Naive thymus-derived CD4-positive, alpha-beta T cell (primary cell): ENCODE measurements at regions of chr2 and their contacts with region 1.

Region 1: GRCh38 chr2:211157856-211158463 is 601.6 kb downstream of the CPS1 start:
- DNase-seq: peak; percentile 10 to 60 (median 37)
- ATAC-seq: peak; percentile 73
- H3K4me3 ChIP-seq: no peak overlapping the region
- H3K4me3 Mint-ChIP-seq: no peak overlapping the region
- H3K27ac ChIP-seq: no peak overlapping the region
- H3K27ac Mint-ChIP-seq: no peak overlapping the region
- H3K4me1 ChIP-seq: no peaks in the 10 kb centered on the region
- H3K4me1 Mint-ChIP-seq: peaks cover 0 to 2% (median 0%) of the 10 kb centered on the region in 7 donors
- H3K27me3 ChIP-seq: no peaks in the 10 kb centered on the region
- H3K27me3 Mint-ChIP-seq: peaks cover 0 to 4% (median 0%) of the 10 kb centered on the region in 5 donors

Region 2: GRCh38 chr2:210252699-210253606 is 905.0 kb before region 1 on chr2:
- CTCF ChIA-PET with region 1: no interaction called
- POLR2A ChIA-PET with region 1: no interaction called
- intact Hi-C with region 1: loop called in 1 of 2 experiments (anchors 5 kb)
- DNase-seq: no peak
- ATAC-seq: no peak
- H3K4me3 ChIP-seq: no peak overlapping the region
- H3K4me3 Mint-ChIP-seq: no peak overlapping the region
- H3K27ac ChIP-seq: no peak overlapping the region
- H3K27ac Mint-ChIP-seq: no peak overlapping the region
- H3K4me1 ChIP-seq: no peaks in the 10 kb centered on the region
- H3K4me1 Mint-ChIP-seq: no peaks in the 10 kb centered on the region
- H3K27me3 ChIP-seq: no peaks in the 10 kb centered on the region
- H3K27me3 Mint-ChIP-seq: peaks cover 0 to 5% (median 0%) of the 10 kb centered on the region in 5 donors

Region 3: GRCh38 chr2:210577263-210578071 is 580.5 kb before region 1 on chr2:
- CTCF ChIA-PET with region 1: no interaction called
- POLR2A ChIA-PET with region 1: no interaction called
- intact Hi-C with region 1: loop called (anchors 2 to 5 kb)
- DNase-seq: peak in 5 of 9 donors; percentile 6 to 31 (median 19)
- ATAC-seq: peak; percentile 48
- H3K4me3 ChIP-seq: no peak overlapping the region
- H3K4me3 Mint-ChIP-seq: no peak overlapping the region
- H3K27ac ChIP-seq: no peak overlapping the region
- H3K27ac Mint-ChIP-seq: no peak overlapping the region
- H3K4me1 ChIP-seq: no peaks in the 10 kb centered on the region
- H3K4me1 Mint-ChIP-seq: peaks cover 0 to 5% (median 0%) of the 10 kb centered on the region in 7 donors
- H3K27me3 ChIP-seq: no peaks in the 10 kb centered on the region
- H3K27me3 Mint-ChIP-seq: peaks cover 0 to 3% (median 0%) of the 10 kb centered on the region in 5 donors

Region 4: DNA sequence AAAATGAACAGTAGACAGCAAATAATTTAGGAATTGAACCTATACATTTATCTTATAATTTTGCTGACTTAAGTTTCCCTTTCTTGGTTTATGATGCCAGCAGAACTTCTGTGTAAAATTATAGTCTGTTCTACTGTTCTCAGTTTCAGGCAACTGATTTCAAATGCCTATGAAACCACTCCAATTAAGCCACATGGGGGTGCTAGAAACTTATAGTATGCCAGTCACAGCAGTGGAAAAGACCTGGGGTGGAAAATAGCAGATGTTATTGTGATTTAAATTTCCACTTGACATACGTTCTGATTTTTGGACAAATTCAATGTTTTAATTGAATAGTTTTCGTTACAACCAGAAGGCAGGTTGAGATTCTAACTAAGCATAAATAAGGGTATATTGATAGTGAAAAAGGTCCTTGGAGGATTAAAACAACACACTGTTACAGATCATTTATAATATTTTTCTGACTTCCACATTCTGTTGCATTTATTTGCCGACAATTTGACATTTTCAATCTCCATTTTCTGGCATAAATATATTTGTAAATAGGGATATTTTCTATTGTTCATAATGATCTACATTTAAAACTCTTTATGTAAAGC is 540.1 kb before region 1 on chr2:
- CTCF ChIA-PET with region 1: no interaction called
- POLR2A ChIA-PET with region 1: no interaction called
- intact Hi-C with region 1: loop called (anchors 2 to 5 kb)
- DNase-seq: no peak
- ATAC-seq: no peak
- H3K4me3 ChIP-seq: no peak overlapping the region
- H3K4me3 Mint-ChIP-seq: no peak overlapping the region
- H3K27ac ChIP-seq: no peak overlapping the region
- H3K27ac Mint-ChIP-seq: no peak overlapping the region
- H3K4me1 ChIP-seq: no peaks in the 10 kb centered on the region
- H3K4me1 Mint-ChIP-seq: no peaks in the 10 kb centered on the region
- H3K27me3 ChIP-seq: no peaks in the 10 kb centered on the region
- H3K27me3 Mint-ChIP-seq: no peaks in the 10 kb centered on the region

Region 5: GRCh38 chr2:210663631-210664089 is 494.3 kb before region 1 on chr2:
- CTCF ChIA-PET with region 1: no interaction called
- POLR2A ChIA-PET with region 1: no interaction called
- intact Hi-C with region 1: loop called in 1 of 2 experiments (anchors 5 kb)
- DNase-seq: no peak
- ATAC-seq: no peak
- H3K4me3 ChIP-seq: no peak overlapping the region
- H3K4me3 Mint-ChIP-seq: no peak overlapping the region
- H3K27ac ChIP-seq: no peak overlapping the region
- H3K27ac Mint-ChIP-seq: no peak overlapping the region
- H3K4me1 ChIP-seq: no peaks in the 10 kb centered on the region
- H3K4me1 Mint-ChIP-seq: no peaks in the 10 kb centered on the region
- H3K27me3 ChIP-seq: no peaks in the 10 kb centered on the region
- H3K27me3 Mint-ChIP-seq: peaks cover 0 to 3% (median 0%) of the 10 kb centered on the region in 5 donors